Psoas muscle (tissue), 8 donors: ENCODE measurements at regions of chr4 and their contacts with region 1.

Region 1: DNA sequence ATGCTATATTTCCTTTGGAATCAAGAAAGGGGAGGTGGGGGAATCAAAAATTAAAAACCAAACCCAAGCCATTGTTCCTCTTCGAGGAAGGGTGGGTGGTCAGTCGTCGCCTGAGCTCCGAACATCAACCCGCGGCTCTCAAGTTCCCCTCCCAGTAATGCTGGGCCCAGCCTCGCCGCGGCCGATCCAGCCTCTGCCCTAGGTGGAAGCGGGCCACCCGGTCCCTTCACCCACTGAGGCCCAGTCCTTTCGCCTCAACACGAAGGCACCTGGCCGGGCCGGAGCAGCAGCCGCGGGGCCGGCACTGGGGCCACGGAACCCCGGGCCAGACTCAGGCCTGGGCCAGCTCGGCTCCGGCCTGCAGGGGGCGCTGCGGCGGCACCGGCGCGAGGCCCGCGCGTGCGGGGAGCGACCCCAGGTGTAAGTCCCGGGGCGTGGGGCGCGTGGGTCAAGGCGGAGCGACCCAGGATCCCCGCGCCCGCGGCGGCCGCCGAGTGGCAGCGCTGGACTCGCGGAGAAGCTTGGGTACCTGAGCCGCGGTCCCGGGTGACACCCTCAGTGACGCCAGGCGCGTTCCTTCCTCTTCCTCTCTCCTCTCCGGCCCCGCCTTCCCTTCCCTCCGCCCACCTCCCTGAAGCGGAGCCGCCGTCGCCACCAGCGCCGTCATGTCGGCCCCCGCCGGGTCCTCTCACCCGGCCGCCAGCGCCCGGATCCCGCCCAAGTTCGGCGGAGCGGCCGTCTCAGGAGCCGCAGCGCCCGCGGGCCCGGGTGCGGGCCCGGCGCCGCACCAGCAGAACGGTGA is at the start of gene SEC24B:
- DNase-seq: peak; percentile 90 to 94
- ATAC-seq: peak; percentile 95 to 96 (median 95)
- H3K4me3 ChIP-seq: peak within 1 kb of the TSS; percentile 91
- H3K27ac ChIP-seq: peak within 1 kb of the TSS; percentile 87
- H3K4me1 ChIP-seq: peaks cover 46% of the 10 kb centered on the region
- H3K27me3 ChIP-seq: no peaks in the 10 kb centered on the region
- CTCF ChIP-seq: peak; percentile 97
- total RNA-seq, gene SEC24B: 30.3 to 34.8 (median 32.7) TPM

Region 2: GRCh38 chr4:109395694-109396093 is 37.7 kb before region 1 on chr4:
- intact Hi-C with region 1: no loop called
- DNase-seq: no peak
- ATAC-seq: no peak
- H3K4me3 ChIP-seq: no peak overlapping the region
- H3K27ac ChIP-seq: no peak overlapping the region
- H3K4me1 ChIP-seq: peaks cover under 1% of the 10 kb centered on the region
- H3K27me3 ChIP-seq: no peaks in the 10 kb centered on the region
- CTCF ChIP-seq: no peak

Region 3: GRCh38 chr4:109472343-109472761 is 38.9 kb after region 1 on chr4:
- intact Hi-C with region 1: loop called in 1 of 2 experiments (anchors 5 kb)
- DNase-seq: no peak
- ATAC-seq: peak in 3 of 4 donors; percentile 33 to 76 (median 57)
- H3K4me3 ChIP-seq: no peak overlapping the region
- H3K27ac ChIP-seq: no peak overlapping the region
- H3K4me1 ChIP-seq: peaks cover 17% of the 10 kb centered on the region
- H3K27me3 ChIP-seq: no peaks in the 10 kb centered on the region
- CTCF ChIP-seq: no peak

Region 4: GRCh38 chr4:109486007-109486406 is 52.6 kb after region 1 on chr4:
- intact Hi-C with region 1: loop called in 1 of 2 experiments (anchors 5 kb)
- DNase-seq: no peak
- ATAC-seq: peak in 1 of 4 donors; percentile 56
- H3K4me3 ChIP-seq: no peak overlapping the region
- H3K27ac ChIP-seq: no peak overlapping the region
- H3K4me1 ChIP-seq: no peaks in the 10 kb centered on the region
- H3K27me3 ChIP-seq: no peaks in the 10 kb centered on the region
- CTCF ChIP-seq: no peak

Region 5: DNA sequence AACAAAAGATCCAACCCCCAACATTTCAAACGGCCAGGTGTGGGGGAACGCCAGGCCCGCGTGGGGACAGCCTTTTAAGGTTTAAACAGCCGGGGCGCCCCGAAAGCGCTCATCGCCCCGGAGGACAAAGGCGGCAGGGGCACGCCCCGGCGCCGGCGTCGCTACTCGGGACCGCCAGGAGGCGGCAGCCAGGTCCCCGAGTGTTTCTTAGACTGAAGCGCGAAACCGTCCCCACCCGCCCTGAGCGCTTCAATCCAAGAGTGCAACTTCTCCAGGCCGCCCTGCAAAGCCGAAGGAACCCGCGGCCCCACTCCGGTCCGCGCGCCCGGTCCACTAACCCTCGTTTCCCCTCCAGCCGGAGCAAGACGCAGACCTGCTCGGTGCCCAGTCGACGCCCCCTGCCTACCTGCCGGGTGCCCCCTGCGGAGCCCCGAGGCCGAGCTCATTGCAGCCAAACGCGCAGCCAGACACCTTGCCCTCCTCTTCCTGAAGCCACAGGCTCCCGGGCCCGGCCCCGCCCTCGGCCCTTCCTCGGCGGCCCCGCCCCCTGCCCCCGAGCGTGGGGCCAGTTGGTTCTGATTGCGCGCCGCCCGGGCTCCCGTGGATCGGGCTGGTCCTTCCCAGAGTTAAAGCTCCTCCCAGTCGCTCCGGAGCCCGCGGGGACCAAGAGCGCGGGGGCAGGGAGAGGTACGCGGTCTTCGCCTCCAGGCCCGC is 269.7 kb after region 1 on chr4 and contains the start of gene CASP6:
- intact Hi-C with region 1: loop called (anchors 5 to 10 kb)
- DNase-seq: peak; percentile 87 to 89
- ATAC-seq: peak; percentile 87 to 96 (median 92)
- H3K4me3 ChIP-seq: peak within 1 kb of the TSS; percentile 77
- H3K27ac ChIP-seq: peak within 1 kb of the TSS; percentile 70
- H3K4me1 ChIP-seq: peaks cover 9% of the 10 kb centered on the region
- H3K27me3 ChIP-seq: no peaks in the 10 kb centered on the region
- CTCF ChIP-seq: peak; percentile 71
- total RNA-seq, gene CASP6: 2.7 to 4.6 (median 4.0) TPM

Region 6: GRCh38 chr4:109815151-109816081 is 382.0 kb after region 1 on chr4 and contains the start of gene GAR1:
- intact Hi-C with region 1: loop called in 1 of 2 experiments (anchors 5 kb)
- DNase-seq: peak; percentile 87 to 93
- ATAC-seq: peak; percentile 99 to 100 (median 100)
- H3K4me3 ChIP-seq: peak within 1 kb of the TSS; percentile 92
- H3K27ac ChIP-seq: peak within 1 kb of the TSS; percentile 92
- H3K4me1 ChIP-seq: peaks cover 10% of the 10 kb centered on the region
- H3K27me3 ChIP-seq: no peaks in the 10 kb centered on the region
- CTCF ChIP-seq: no peak
- total RNA-seq, gene GAR1: 7.7 to 17.9 (median 11.3) TPM